ENCODE measurements at regions of chr20 and their contacts with region 1.

Region 1: GRCh38 chr20:11544029-11544678 is 373.5 kb upstream of the BTBD3 start:
- DNase-seq: peak in 1 of 5 donors; percentile 44
- H3K4me3 ChIP-seq: no peak overlapping the region
- H3K27ac ChIP-seq: no peak overlapping the region
- H3K4me1 ChIP-seq: no peaks in the 10 kb centered on the region
- H3K27me3 ChIP-seq: no peaks in the 10 kb centered on the region
- CTCF ChIP-seq: peak; percentile 41 to 71 (median 65)
- EP300 ChIP-seq: no peak
- POLR2A ChIP-seq: no peak

Region 2: DNA sequence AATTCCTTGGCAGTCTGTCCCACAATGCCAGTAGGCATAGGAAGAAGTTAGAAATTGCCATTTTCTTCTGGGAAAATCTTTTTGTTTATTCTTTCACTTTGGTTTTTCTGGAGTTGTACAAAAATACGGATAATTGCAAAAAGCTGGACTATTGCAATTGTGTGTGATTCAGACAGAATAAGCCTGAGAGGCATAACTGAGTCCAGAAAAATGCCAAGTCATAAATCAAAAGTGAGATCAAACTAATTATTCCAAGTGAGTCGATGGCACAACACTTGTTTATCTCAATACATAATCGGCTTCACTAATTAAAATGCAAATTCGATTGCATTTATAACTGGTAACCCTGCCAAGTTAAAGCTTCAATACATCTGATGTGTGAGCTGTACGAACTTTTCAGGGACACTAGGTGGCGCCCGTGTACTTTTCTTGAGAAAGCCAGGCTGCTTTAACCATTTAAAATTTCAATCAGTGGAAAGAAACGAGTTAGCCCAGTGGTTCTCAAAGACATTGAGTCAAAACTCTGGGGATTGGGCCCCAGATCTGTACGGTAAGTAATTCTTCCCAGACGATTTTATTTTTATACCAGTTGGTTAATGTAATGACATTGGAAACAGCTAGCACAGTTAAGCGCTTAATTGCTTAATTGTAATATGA is 1927.2 kb before region 1 on chr20:
- intact Hi-C with region 1: loop called in 1 of 4 experiments (anchors 10 kb)
- DNase-seq: peak in 4 of 5 donors; percentile 30 to 54 (median 48)
- H3K4me3 ChIP-seq: no peak overlapping the region
- H3K27ac ChIP-seq: no peak overlapping the region
- H3K4me1 ChIP-seq: no peaks in the 10 kb centered on the region
- H3K27me3 ChIP-seq: no peaks in the 10 kb centered on the region
- CTCF ChIP-seq: peak; percentile 35 to 57 (median 37)
- EP300 ChIP-seq: no peak
- POLR2A ChIP-seq: no peak

Region 3: DNA sequence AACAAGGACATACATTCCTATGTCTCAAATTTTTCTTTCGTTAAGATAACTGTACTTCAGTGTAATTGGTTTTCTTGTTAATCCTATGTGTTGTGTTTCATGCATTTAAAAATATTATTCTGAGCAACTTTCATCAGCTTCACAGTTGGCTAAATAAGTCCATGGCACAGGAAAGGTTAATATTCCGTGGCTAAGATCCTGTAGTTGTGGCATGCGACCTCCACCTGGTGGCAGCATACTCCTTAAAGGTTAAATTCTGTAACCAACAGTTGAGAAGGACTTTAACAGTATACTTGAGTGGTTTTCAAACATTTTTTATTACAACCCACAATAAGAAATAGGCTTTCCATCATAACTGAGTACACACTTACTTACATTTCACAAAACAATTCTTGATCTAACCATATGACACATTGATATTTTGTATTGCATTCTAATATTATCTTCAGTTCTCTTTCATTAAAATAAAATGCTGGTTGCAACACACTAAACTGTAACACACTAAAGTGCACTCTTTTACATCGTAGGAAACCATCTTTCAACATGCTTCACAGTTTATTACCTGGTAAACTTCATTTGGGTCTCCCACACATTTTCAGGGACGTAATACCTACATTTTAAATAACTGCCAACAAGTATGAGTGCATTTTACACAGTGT is 990.7 kb before region 1 on chr20:
- intact Hi-C with region 1: loop called in 2 of 4 experiments (anchors 10 kb)
- DNase-seq: peak; percentile 30 to 81 (median 66)
- H3K4me3 ChIP-seq: no peak overlapping the region
- H3K27ac ChIP-seq: no peak overlapping the region
- H3K4me1 ChIP-seq: peaks cover under 1% of the 10 kb centered on the region
- H3K27me3 ChIP-seq: no peaks in the 10 kb centered on the region
- CTCF ChIP-seq: peak; percentile 52 to 76 (median 69)
- EP300 ChIP-seq: no peak
- POLR2A ChIP-seq: no peak

Measured in ovary (tissue), 10 donors.